Activated CD4-positive, alpha-beta memory T cell treated with anti-CD3 and anti-CD28 coated beads for 36 hours (primary cell): ENCODE measurements at regions of chr12 and their contacts with region 1.

Region 1: GRCh38 chr12:46372544-46373110 is at the start of gene SLC38A2:
- DNase-seq: peak; percentile 97
- H3K4me3 Mint-ChIP-seq: peak within 1 kb of the TSS; percentile 95
- H3K27ac Mint-ChIP-seq: peak within 1 kb of the TSS; percentile 99
- H3K4me1 Mint-ChIP-seq: peaks cover 54% of the 10 kb centered on the region
- H3K27me3 Mint-ChIP-seq: peaks cover 6% of the 10 kb centered on the region
- total RNA-seq, gene SLC38A2: 173 to 187 TPM

Region 2: DNA sequence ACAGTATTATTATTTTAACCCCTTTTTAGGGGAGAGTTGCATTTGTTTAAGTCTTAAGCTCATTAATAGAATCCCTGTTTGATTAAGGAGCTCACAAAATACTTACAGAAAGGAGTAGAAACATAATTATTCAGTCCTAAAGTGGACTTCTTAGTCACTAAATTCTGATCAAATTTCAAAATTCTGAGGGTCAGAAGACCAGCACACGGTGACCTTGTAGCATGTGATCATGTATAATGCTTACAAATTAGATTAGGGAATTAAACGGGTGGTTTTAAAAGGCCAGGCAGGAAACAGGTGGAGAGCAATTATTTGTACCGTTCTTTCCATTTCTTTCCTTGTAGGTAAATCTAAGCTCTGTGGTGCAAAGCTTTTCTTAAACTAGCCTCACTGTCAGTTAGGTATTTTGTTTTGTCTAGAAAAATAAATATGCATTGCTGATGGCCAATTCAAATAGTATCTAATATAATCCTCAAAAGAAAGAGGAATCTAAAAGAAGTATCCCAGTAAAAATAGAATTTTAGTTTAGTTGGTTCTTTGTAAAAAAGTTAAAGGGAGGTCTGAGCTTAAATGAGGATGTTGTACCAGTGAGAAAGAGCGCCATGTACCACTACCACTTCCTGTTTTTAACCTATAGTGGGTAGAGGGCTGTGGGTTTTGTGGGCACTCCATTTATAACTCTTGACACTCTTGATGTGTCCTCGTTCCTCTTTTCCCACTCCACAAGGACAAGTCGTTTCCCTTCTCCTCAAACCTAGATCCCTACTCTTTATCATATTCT is 154.9 kb before region 1 on chr12:
- CTCF ChIA-PET with region 1: no interaction called
- POLR2A ChIA-PET with region 1: interaction called, 5 read pairs
- intact Hi-C with region 1: loop called (anchors 1 kb)
- DNase-seq: peak; percentile 75
- H3K4me3 Mint-ChIP-seq: peak overlapping the region; percentile 61
- H3K27ac Mint-ChIP-seq: peak overlapping the region; percentile 98
- H3K4me1 Mint-ChIP-seq: peaks cover 95% of the 10 kb centered on the region
- H3K27me3 Mint-ChIP-seq: no peaks in the 10 kb centered on the region

Region 3: DNA sequence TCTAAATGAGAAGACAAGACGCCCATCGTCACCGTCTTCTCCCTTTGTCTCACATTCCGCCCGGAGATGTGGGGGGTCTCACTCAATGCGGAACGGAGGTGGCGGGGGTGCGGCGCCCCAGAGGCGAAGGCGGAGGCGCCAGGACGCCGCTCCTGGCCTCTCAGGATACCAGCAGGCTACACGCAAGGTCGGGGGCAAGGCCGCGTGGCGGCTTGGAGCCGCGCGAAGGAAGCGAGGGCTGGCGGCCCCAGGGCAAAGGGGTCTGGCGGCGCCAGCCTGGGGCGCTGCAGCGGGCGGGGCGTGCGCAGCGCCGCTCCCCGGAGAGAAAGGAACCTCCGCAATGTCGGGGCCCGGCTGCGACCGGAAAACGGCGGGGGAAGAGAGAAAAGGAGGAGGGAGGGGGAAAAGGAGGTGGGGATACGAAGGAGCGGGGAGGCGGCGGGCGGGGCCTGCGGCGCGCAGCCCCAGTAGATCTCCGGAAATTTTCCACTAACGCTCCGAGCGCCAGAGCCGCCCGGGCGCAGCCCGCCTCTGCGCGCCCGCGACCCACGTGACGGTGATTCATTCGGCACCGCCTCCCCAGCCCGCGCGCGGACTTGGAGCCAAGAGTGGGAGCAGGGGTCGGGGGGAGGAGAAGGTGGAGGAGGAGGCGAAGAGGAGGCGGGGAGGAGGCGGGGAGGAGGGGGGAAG is 10.5 kb after region 1 on chr12:
- CTCF ChIA-PET with region 1: interaction called, 3 read pairs
- POLR2A ChIA-PET with region 1: interaction called, 17 read pairs
- intact Hi-C with region 1: loop called (anchors 1 kb)
- DNase-seq: peak; percentile 96
- H3K4me3 Mint-ChIP-seq: peak overlapping the region; percentile 80
- H3K27ac Mint-ChIP-seq: peak overlapping the region; percentile 92
- H3K4me1 Mint-ChIP-seq: peaks cover 27% of the 10 kb centered on the region
- H3K27me3 Mint-ChIP-seq: no peaks in the 10 kb centered on the region

Region 4: GRCh38 chr12:46523863-46524770 is 151.5 kb after region 1 on chr12:
- CTCF ChIA-PET with region 1: no interaction called
- POLR2A ChIA-PET with region 1: interaction called, 16 read pairs
- intact Hi-C with region 1: no loop called
- DNase-seq: peak; percentile 74
- H3K4me3 Mint-ChIP-seq: peak overlapping the region; percentile 65
- H3K27ac Mint-ChIP-seq: peak overlapping the region; percentile 90
- H3K4me1 Mint-ChIP-seq: peaks cover 30% of the 10 kb centered on the region
- H3K27me3 Mint-ChIP-seq: no peaks in the 10 kb centered on the region

Region 5: GRCh38 chr12:46794593-46795190 is 422.1 kb after region 1 on chr12:
- CTCF ChIA-PET with region 1: no interaction called
- POLR2A ChIA-PET with region 1: no interaction called
- intact Hi-C with region 1: loop called (anchors 10 kb)
- DNase-seq: peak; percentile 16
- H3K4me3 Mint-ChIP-seq: no peak overlapping the region
- H3K27ac Mint-ChIP-seq: peak overlapping the region; percentile 46
- H3K4me1 Mint-ChIP-seq: peaks cover 17% of the 10 kb centered on the region
- H3K27me3 Mint-ChIP-seq: peaks cover 16% of the 10 kb centered on the region

Region 6: DNA sequence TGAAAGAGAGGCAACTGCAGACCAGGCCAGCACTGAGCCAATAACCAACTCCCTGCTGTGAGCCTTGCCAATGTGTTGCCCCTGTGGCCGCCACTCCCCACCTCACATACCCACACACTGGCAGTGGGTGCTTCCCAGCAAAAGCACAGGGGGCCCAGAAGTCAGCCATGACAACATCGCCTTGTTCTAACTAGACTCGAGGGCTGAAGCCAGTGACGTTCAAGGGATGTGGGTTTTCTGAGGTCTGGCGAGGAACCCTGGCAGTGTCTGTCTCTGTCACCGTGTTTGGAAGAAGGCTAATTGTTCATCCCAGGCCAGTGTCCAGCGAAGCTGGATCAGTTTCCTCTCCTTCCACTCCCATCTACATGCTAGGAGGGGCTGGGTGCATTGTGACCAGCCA is 1018.9 kb after region 1 on chr12:
- CTCF ChIA-PET with region 1: no interaction called
- POLR2A ChIA-PET with region 1: no interaction called
- intact Hi-C with region 1: loop called (anchors 5 kb)
- DNase-seq: peak; percentile 86
- H3K4me3 Mint-ChIP-seq: peak overlapping the region; percentile 71
- H3K27ac Mint-ChIP-seq: peak overlapping the region; percentile 100
- H3K4me1 Mint-ChIP-seq: peaks cover 85% of the 10 kb centered on the region
- H3K27me3 Mint-ChIP-seq: no peaks in the 10 kb centered on the region